CD4-positive, alpha-beta memory T cell (primary cell): ENCODE measurements at regions of chr2 and their contacts with region 1.

Region 1: GRCh38 chr2:74178201-74179062 is at the start of gene MOB1A:
- DNase-seq: peak; percentile 97 to 99 (median 98)
- H3K4me3 ChIP-seq: peak within 1 kb of the TSS; percentile 69 to 74
- H3K4me3 Mint-ChIP-seq: peak within 1 kb of the TSS; percentile 90 to 94 (median 94)
- H3K27ac ChIP-seq: peak within 1 kb of the TSS; percentile 99
- H3K27ac Mint-ChIP-seq: peak within 1 kb of the TSS; percentile 89 to 96 (median 95)
- H3K4me1 ChIP-seq: peaks cover 47% of the 10 kb centered on the region
- H3K4me1 Mint-ChIP-seq: peaks cover 22 to 48% (median 35%) of the 10 kb centered on the region in 4 donors
- H3K27me3 ChIP-seq: no peaks in the 10 kb centered on the region
- H3K27me3 Mint-ChIP-seq: no peaks in the 10 kb centered on the region
- total RNA-seq, gene MOB1A: 135 TPM

Region 2: GRCh38 chr2:73828818-73829570 is 349.4 kb before region 1 on chr2 and contains the start of gene STAMBP:
- CTCF ChIA-PET with region 1: interaction called, 15 read pairs
- POLR2A ChIA-PET with region 1: interaction called, 27 read pairs
- intact Hi-C with region 1: no loop called
- DNase-seq: peak; percentile 87 to 95 (median 91)
- H3K4me3 ChIP-seq: peak within 1 kb of the TSS; percentile 64 to 81
- H3K4me3 Mint-ChIP-seq: peak within 1 kb of the TSS; percentile 91 to 99 (median 96)
- H3K27ac ChIP-seq: peak within 1 kb of the TSS; percentile 92
- H3K27ac Mint-ChIP-seq: peak within 1 kb of the TSS; percentile 94 to 100 (median 98)
- H3K4me1 ChIP-seq: peaks cover 45% of the 10 kb centered on the region
- H3K4me1 Mint-ChIP-seq: peaks cover 34 to 49% (median 40%) of the 10 kb centered on the region in 4 donors
- H3K27me3 ChIP-seq: no peaks in the 10 kb centered on the region
- H3K27me3 Mint-ChIP-seq: no peaks in the 10 kb centered on the region
- total RNA-seq, gene STAMBP: 34.8 to 37.3 TPM

Region 3: DNA sequence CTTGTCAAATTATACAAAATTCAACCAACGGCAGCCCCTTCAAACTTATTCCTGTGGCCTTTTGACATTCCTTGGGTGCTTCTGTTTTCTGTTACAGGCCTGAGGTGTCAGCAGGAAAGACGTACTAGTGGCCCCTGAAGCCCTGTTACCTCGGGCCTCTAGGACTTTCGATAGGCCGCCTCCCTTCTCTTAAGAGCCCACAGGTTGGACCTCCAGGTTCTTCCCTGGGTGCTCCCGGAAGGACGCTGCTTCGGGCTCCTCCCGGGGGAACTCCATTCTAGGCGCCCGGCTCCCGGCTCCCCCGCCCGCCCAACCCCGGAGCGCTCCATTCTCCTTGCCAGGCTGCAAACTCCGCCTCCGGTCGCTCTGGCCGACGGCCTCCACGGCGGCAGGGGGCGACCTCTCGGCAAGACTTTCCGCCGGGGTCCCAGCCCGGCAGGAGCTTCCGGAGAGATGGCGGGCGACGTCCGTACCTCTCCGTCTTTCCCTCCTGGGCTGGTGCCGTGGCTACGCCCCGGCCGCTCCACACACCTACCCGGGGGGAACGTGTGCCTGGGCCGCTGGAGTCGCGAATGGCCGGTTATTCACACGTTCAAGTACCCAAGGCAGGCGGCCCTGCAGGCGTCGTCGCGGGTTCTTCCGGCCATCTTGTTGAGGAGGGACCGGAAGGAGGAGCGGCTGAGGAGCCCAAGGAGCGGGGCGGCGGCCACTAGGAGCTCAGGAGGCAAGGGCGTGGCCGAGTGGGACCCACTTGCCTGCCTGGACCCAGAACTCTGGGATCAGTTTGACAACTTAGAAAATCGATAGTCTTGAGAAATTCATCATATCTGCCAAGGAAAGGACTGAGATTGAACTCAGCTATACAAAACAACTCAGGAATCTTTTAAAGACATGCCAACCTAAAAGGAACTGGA is 58.3 kb before region 1 on chr2:
- CTCF ChIA-PET with region 1: interaction called, 10 read pairs
- POLR2A ChIA-PET with region 1: interaction called, 25 read pairs
- intact Hi-C with region 1: loop called (anchors 1 kb)
- DNase-seq: peak; percentile 79 to 85 (median 80)
- H3K4me3 ChIP-seq: peak overlapping the region; percentile 33 to 94
- H3K4me3 Mint-ChIP-seq: peak overlapping the region; percentile 85 to 92 (median 88)
- H3K27ac ChIP-seq: peak overlapping the region; percentile 70
- H3K27ac Mint-ChIP-seq: peak overlapping the region; percentile 79 to 97 (median 92)
- H3K4me1 ChIP-seq: no peaks in the 10 kb centered on the region
- H3K4me1 Mint-ChIP-seq: peaks cover 4 to 11% (median 7%) of the 10 kb centered on the region in 4 donors
- H3K27me3 ChIP-seq: no peaks in the 10 kb centered on the region
- H3K27me3 Mint-ChIP-seq: peaks cover 0 to under 1% of the 10 kb centered on the region in 2 donors

Region 4: GRCh38 chr2:74155830-74156229 is 22.6 kb before region 1 on chr2:
- CTCF ChIA-PET with region 1: interaction called, 17 read pairs
- POLR2A ChIA-PET with region 1: interaction called, 9 read pairs
- intact Hi-C with region 1: no loop called
- DNase-seq: no peak
- H3K4me3 ChIP-seq: no peak overlapping the region
- H3K4me3 Mint-ChIP-seq: no peak overlapping the region
- H3K27ac ChIP-seq: no peak overlapping the region
- H3K27ac Mint-ChIP-seq: peak overlapping the region in 1 of 7 donors; percentile 19
- H3K4me1 ChIP-seq: no peaks in the 10 kb centered on the region
- H3K4me1 Mint-ChIP-seq: peaks cover 0 to 4% (median 0%) of the 10 kb centered on the region in 4 donors
- H3K27me3 ChIP-seq: no peaks in the 10 kb centered on the region
- H3K27me3 Mint-ChIP-seq: no peaks in the 10 kb centered on the region

Region 5: DNA sequence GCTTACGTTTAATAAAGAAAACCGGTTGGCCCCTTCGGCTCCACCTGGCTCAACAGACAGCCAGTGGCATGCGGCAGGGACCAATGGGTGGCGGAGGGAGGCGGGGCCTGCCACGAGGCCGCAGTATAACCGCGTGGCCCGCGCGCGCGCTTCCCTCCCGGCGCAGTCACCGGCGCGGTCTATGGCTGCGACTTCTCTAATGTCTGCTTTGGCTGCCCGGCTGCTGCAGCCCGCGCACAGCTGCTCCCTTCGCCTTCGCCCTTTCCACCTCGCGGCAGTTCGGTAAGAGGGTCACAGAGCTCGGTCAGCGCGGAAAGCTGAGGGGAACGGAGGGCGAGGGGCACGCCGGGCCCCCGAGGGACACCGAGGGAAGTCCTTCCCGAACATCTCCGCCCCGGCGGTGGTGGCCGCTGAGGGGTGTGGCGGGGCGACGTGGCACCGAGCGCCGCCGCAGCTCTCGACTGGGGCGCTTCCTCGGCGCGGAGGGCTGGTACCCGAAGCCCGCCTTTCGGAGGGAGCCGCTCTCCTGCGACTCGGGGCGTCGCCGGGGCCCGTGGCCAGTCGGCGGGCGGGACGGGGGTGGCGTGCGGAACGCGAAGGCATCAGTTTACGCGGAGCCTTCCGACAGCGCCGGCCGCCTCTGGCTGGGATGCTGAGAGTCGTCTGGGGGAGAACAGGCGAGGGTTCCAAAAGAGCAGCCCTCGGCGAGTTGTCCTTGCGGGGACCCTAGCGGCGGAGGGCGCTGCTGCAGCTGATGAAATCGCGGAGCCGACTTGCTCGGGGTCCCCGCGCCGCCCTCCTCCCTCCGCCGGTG is 20.2 kb after region 1 on chr2 and contains the start of gene MTHFD2:
- CTCF ChIA-PET with region 1: interaction called, 51 read pairs
- POLR2A ChIA-PET with region 1: interaction called, 128 read pairs
- intact Hi-C with region 1: loop called (anchors 1 kb)
- DNase-seq: peak; percentile 84 to 89 (median 86)
- H3K4me3 ChIP-seq: peak within 1 kb of the TSS; percentile 85 to 91
- H3K4me3 Mint-ChIP-seq: peak within 1 kb of the TSS; percentile 94 to 100 (median 98)
- H3K27ac ChIP-seq: peak within 1 kb of the TSS; percentile 86
- H3K27ac Mint-ChIP-seq: peak within 1 kb of the TSS; percentile 89 to 100 (median 99)
- H3K4me1 ChIP-seq: peaks cover 35% of the 10 kb centered on the region
- H3K4me1 Mint-ChIP-seq: peaks cover 20 to 41% (median 31%) of the 10 kb centered on the region in 4 donors
- H3K27me3 ChIP-seq: no peaks in the 10 kb centered on the region
- H3K27me3 Mint-ChIP-seq: no peaks in the 10 kb centered on the region
- total RNA-seq, gene MTHFD2: 23.8 to 25.0 TPM

Region 6: GRCh38 chr2:74206180-74206688 is 27.8 kb after region 1 on chr2:
- CTCF ChIA-PET with region 1: interaction called, 51 read pairs
- POLR2A ChIA-PET with region 1: interaction called, 128 read pairs
- intact Hi-C with region 1: no loop called
- DNase-seq: peak; percentile 53 to 64 (median 55)
- H3K4me3 ChIP-seq: peak overlapping the region in 1 of 2 donors; percentile 23
- H3K4me3 Mint-ChIP-seq: peak overlapping the region; percentile 74 to 85 (median 80)
- H3K27ac ChIP-seq: peak overlapping the region; percentile 68
- H3K27ac Mint-ChIP-seq: peak overlapping the region; percentile 91 to 99 (median 96)
- H3K4me1 ChIP-seq: peaks cover 52% of the 10 kb centered on the region
- H3K4me1 Mint-ChIP-seq: peaks cover 27 to 56% (median 39%) of the 10 kb centered on the region in 4 donors
- H3K27me3 ChIP-seq: no peaks in the 10 kb centered on the region
- H3K27me3 Mint-ChIP-seq: no peaks in the 10 kb centered on the region